Lower lobe of right lung (tissue), 2 donors: ENCODE measurements at regions of chr6 and their contacts with region 1.

Region 1: GRCh38 chr6:136031982-136032381 is 180.5 kb downstream of the PDE7B start:
- DNase-seq: no peak
- ATAC-seq: peak in 1 of 2 donors; percentile 53
- H3K4me3 ChIP-seq: no peak overlapping the region
- H3K27ac ChIP-seq: no peak overlapping the region
- H3K4me1 ChIP-seq: peaks cover 17% of the 10 kb centered on the region
- H3K27me3 ChIP-seq: no peaks in the 10 kb centered on the region
- CTCF ChIP-seq: peak; percentile 34

Region 2: GRCh38 chr6:135651964-135652755 is 379.8 kb before region 1 on chr6:
- intact Hi-C with region 1: no loop called
- DNase-seq: no peak
- ATAC-seq: no peak
- H3K4me3 ChIP-seq: no peak overlapping the region
- H3K27ac ChIP-seq: no peak overlapping the region
- H3K4me1 ChIP-seq: no peaks in the 10 kb centered on the region
- H3K27me3 ChIP-seq: no peaks in the 10 kb centered on the region
- CTCF ChIP-seq: no peak

Region 3: GRCh38 chr6:135922174-135922573 is 109.8 kb before region 1 on chr6:
- intact Hi-C with region 1: no loop called
- DNase-seq: no peak
- ATAC-seq: peak; percentile 78 to 87
- H3K4me3 ChIP-seq: no peak overlapping the region
- H3K27ac ChIP-seq: no peak overlapping the region
- H3K4me1 ChIP-seq: no peaks in the 10 kb centered on the region
- H3K27me3 ChIP-seq: no peaks in the 10 kb centered on the region
- CTCF ChIP-seq: no peak

Region 4: DNA sequence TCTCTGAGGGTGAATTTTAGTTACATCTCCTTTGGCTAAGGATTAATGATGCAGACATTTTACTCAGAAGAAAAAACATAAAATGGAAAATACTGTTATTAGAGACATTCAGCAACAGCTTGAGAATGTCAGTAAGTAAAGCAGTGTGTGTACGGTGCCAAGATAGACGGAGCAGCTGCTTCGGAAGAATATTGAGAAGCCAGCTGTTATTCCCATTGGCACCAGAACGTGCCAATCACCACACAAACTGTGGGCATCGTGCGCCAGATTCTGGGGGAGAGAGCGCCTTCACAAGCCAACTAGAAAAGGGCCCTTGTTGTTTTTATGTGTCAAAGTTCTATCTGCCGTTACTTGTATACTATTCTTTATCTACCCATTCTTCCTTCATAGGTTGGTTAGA is 54.7 kb after region 1 on chr6:
- intact Hi-C with region 1: no loop called
- DNase-seq: no peak
- ATAC-seq: no peak
- H3K4me3 ChIP-seq: peak overlapping the region; percentile 3
- H3K27ac ChIP-seq: no peak overlapping the region
- H3K4me1 ChIP-seq: peaks cover 7% of the 10 kb centered on the region
- H3K27me3 ChIP-seq: no peaks in the 10 kb centered on the region
- CTCF ChIP-seq: no peak

Region 5: GRCh38 chr6:136226027-136226673 is 194.2 kb after region 1 on chr6:
- intact Hi-C with region 1: loop called (anchors 10 kb)
- DNase-seq: peak; percentile 70
- ATAC-seq: peak; percentile 94
- H3K4me3 ChIP-seq: peak overlapping the region; percentile 37
- H3K27ac ChIP-seq: no peak overlapping the region
- H3K4me1 ChIP-seq: peaks cover 16% of the 10 kb centered on the region
- H3K27me3 ChIP-seq: no peaks in the 10 kb centered on the region
- CTCF ChIP-seq: peak; percentile 100